ENCODE measurements at regions of chr13 and their contacts with region 1.

Region 1: GRCh38 chr13:59398127-59398526 is 765.6 kb downstream of the DIAPH3 start:
- DNase-seq: no peak
- ATAC-seq: no peak
- H3K4me3 ChIP-seq: no peak overlapping the region
- H3K27ac ChIP-seq: no peak overlapping the region
- H3K4me1 ChIP-seq: peaks cover 7% of the 10 kb centered on the region
- H3K27me3 ChIP-seq: no peaks in the 10 kb centered on the region
- CTCF ChIP-seq: no peak
- POLR2A ChIP-seq: no peak

Region 2: DNA sequence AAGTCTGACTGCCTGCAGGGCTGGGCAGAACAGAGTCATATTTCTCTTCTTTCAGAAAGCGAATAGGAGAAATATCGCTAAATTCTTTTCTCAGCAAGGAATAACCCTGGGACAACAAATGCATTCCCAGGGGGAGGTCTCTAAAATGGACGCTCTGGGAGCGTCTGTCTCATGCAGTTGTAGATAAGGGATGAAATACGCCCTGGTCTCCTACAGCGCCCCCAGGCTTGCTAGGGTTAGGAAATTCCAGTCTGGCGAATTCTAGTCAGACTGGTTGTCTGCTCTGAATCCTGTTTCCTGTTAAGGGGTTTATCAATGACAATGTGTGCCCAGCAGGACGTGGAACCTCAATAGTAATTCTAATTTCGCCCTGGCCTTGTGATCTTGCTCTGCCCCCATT is 448.5 kb before region 1 on chr13:
- intact Hi-C with region 1: no loop called
- DNase-seq: no peak
- ATAC-seq: no peak
- H3K4me3 ChIP-seq: no peak overlapping the region
- H3K27ac ChIP-seq: no peak overlapping the region
- H3K4me1 ChIP-seq: no peaks in the 10 kb centered on the region
- H3K27me3 ChIP-seq: no peaks in the 10 kb centered on the region
- CTCF ChIP-seq: no peak
- POLR2A ChIP-seq: no peak

Region 3: GRCh38 chr13:59671881-59672280 is 273.8 kb after region 1 on chr13:
- intact Hi-C with region 1: loop called (anchors 5 kb)
- DNase-seq: no peak
- ATAC-seq: no peak
- H3K4me3 ChIP-seq: no peak overlapping the region
- H3K27ac ChIP-seq: no peak overlapping the region
- H3K4me1 ChIP-seq: peaks cover 10% of the 10 kb centered on the region
- H3K27me3 ChIP-seq: no peaks in the 10 kb centered on the region
- CTCF ChIP-seq: no peak
- POLR2A ChIP-seq: no peak